Activated CD8-positive, alpha-beta T cell treated with anti-CD3 and anti-CD28 coated beads for 36 hours (primary cell): ENCODE measurements at regions of chr4 and their contacts with region 1.

Region 1: DNA sequence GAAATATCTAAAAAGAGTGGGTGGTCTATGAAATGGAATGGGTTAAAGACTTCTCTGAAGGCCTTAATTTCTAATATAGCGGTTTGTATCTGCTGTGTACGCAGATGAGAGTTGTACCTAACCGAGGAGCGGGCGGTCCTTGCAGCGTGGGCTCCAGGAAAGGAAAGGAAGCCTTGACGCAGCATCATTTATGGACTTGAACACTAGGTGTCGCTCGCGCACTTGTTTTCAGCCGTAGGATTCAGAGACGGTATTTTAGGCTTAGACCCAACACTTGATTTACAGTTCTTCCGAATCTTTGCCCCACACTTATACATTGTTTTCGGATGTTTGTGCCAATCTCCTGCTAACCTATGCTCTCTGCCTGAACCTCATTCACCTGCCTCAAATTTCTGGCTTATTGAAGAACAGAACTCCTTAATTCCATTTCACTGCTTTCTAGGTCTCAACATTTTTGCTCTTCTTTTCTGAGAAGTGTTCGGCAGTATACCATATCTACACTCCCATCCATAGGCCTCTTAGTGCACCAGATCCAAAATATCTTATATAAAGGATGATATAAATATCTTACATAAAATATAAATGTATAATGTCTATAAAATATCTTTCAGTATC is 48.9 kb upstream of the AADAT start:
- DNase-seq: peak; percentile 85
- ATAC-seq: peak; percentile 62
- H3K4me3 Mint-ChIP-seq: no peak overlapping the region
- H3K27ac Mint-ChIP-seq: no peak overlapping the region
- H3K4me1 Mint-ChIP-seq: peaks cover 2% of the 10 kb centered on the region
- H3K27me3 Mint-ChIP-seq: peaks cover 3% of the 10 kb centered on the region
- CTCF ChIP-seq: peak; percentile 68

Region 2: GRCh38 chr4:170234800-170235199 is 96.1 kb after region 1 on chr4:
- CTCF ChIA-PET with region 1: no interaction called
- POLR2A ChIA-PET with region 1: no interaction called
- intact Hi-C with region 1: loop called (anchors 10 kb)
- DNase-seq: no peak
- ATAC-seq: no peak
- H3K4me3 Mint-ChIP-seq: no peak overlapping the region
- H3K27ac Mint-ChIP-seq: no peak overlapping the region
- H3K4me1 Mint-ChIP-seq: no peaks in the 10 kb centered on the region
- H3K27me3 Mint-ChIP-seq: no peaks in the 10 kb centered on the region
- CTCF ChIP-seq: no peak

Region 3: DNA sequence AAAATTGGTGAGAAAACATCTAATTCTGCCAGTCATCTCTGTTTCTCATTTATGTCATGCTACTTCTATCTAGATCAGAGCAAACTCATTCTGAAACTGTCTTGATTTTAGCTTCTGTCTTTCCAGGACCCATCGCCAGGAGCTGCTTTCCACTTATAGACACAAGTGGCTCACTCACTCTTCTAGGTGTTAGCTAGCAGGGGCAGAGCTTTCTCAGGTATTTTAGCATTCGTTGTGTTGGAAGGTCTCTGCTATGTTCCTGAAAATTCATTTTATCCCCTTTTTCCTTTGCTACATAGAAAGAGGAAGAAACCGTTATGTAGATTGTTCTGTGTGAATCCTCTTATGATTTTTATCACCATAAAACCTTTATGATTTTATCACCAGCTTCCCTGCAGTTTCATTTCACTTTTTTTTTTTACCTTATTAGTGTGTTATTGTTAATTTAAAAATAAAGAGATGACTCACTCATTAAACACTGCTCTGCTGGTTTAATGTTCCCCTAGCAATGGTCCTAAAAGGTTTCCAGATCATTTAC is 197.6 kb after region 1 on chr4:
- CTCF ChIA-PET with region 1: no interaction called
- POLR2A ChIA-PET with region 1: no interaction called
- intact Hi-C with region 1: no loop called
- DNase-seq: no peak
- ATAC-seq: no peak
- H3K4me3 Mint-ChIP-seq: no peak overlapping the region
- H3K27ac Mint-ChIP-seq: no peak overlapping the region
- H3K4me1 Mint-ChIP-seq: no peaks in the 10 kb centered on the region
- H3K27me3 Mint-ChIP-seq: no peaks in the 10 kb centered on the region
- CTCF ChIP-seq: no peak